Breast epithelium (tissue), 4 donors: ENCODE measurements at regions of chr2 and their contacts with region 1.

Region 1: GRCh38 chr2:149017116-149017985 is 21.1 kb upstream of the LYPD6B start:
- DNase-seq: peak; percentile 69 to 79
- H3K4me3 ChIP-seq: no peak overlapping the region
- H3K27ac ChIP-seq: no peak overlapping the region
- H3K4me1 ChIP-seq: no peaks in the 10 kb centered on the region
- H3K27me3 ChIP-seq: no peaks in the 10 kb centered on the region
- CTCF ChIP-seq: peak; percentile 70 to 84 (median 82)
- POLR2A ChIP-seq: no peak

Region 2: DNA sequence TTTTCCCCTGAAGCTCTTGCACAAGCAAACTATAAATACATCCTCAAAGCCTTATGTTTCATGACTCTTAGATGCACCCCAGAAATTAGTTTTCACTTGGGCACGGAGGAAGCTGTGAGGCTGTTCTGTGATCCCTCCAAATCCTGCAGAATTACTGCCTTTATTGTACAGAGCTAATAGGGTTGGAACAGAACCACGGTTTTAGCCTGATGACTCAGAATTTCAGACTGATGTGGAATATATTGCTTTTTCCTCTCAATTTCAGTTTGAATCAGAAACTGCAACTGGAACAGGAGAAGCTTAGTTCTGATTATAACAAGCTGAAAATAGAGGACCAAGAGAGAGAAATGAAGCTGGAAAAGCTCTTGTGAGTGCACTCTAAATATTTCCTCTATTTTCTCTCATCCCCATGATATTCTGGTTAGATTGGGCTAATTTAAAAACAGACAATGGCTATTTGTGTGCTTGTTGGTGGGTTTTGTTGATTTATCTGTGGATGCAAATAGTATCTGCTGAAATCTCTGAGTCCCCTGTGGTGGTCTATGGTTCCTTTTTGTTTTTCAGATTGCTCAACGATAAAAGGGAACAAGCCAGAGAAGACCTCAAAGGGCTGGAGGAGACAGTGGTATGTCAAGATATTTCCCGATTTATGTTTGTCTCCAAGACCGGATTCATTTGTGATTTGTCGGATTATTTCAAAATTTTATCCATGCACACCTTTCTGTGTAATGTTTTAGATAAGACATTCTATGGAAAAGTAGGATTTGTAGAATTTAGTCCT is 17.0 kb before region 1 on chr2:
- intact Hi-C with region 1: loop called (anchors 1 kb)
- DNase-seq: no peak
- H3K4me3 ChIP-seq: no peak overlapping the region
- H3K27ac ChIP-seq: no peak overlapping the region
- H3K4me1 ChIP-seq: peaks cover 0 to 12% of the 10 kb centered on the region in 2 donors
- H3K27me3 ChIP-seq: no peaks in the 10 kb centered on the region
- CTCF ChIP-seq: no peak
- POLR2A ChIP-seq: no peak

Region 3: GRCh38 chr2:150120326-150120955 is 1103.1 kb after region 1 on chr2:
- intact Hi-C with region 1: loop called (anchors 5 kb)
- DNase-seq: no peak
- H3K4me3 ChIP-seq: peak overlapping the region in 1 of 3 donors; percentile 39
- H3K27ac ChIP-seq: no peak overlapping the region
- H3K4me1 ChIP-seq: no peaks in the 10 kb centered on the region
- H3K27me3 ChIP-seq: no peaks in the 10 kb centered on the region
- CTCF ChIP-seq: no peak
- POLR2A ChIP-seq: no peak